CD14-positive monocyte (primary cell): ENCODE measurements at regions of chr1 and their contacts with region 1.

Region 1: GRCh38 chr1:44594871-44595746 is 79.2 kb downstream of the TMEM53 start:
- DNase-seq: peak; percentile 64 to 71 (median 71)
- H3K4me3 ChIP-seq: no peak overlapping the region
- H3K4me3 Mint-ChIP-seq: no peak overlapping the region
- H3K27ac ChIP-seq: no peak overlapping the region
- H3K27ac Mint-ChIP-seq: peak overlapping the region in 1 of 7 donors; percentile 64
- H3K4me1 ChIP-seq: peaks cover 14 to 17% of the 10 kb centered on the region in 2 donors
- H3K4me1 Mint-ChIP-seq: peaks cover 20% of the 10 kb centered on the region
- H3K27me3 ChIP-seq: no peaks in the 10 kb centered on the region
- H3K27me3 Mint-ChIP-seq: peaks cover 0 to 3% (median 3%) of the 10 kb centered on the region in 3 donors
- CTCF ChIP-seq: peak; percentile 99

Region 2: GRCh38 chr1:44377925-44378784 is 217.0 kb before region 1 on chr1:
- intact Hi-C with region 1: loop called (anchors 1 kb)
- DNase-seq: peak; percentile 47 to 68 (median 65)
- H3K4me3 ChIP-seq: no peak overlapping the region
- H3K4me3 Mint-ChIP-seq: no peak overlapping the region
- H3K27ac ChIP-seq: no peak overlapping the region
- H3K27ac Mint-ChIP-seq: no peak overlapping the region
- H3K4me1 ChIP-seq: no peaks in the 10 kb centered on the region
- H3K4me1 Mint-ChIP-seq: no peaks in the 10 kb centered on the region
- H3K27me3 ChIP-seq: no peaks in the 10 kb centered on the region
- H3K27me3 Mint-ChIP-seq: peaks cover 0 to 3% (median 0%) of the 10 kb centered on the region in 3 donors
- CTCF ChIP-seq: peak; percentile 88